ENCODE measurements at regions of chr5 and their contacts with region 1.

Region 1: DNA sequence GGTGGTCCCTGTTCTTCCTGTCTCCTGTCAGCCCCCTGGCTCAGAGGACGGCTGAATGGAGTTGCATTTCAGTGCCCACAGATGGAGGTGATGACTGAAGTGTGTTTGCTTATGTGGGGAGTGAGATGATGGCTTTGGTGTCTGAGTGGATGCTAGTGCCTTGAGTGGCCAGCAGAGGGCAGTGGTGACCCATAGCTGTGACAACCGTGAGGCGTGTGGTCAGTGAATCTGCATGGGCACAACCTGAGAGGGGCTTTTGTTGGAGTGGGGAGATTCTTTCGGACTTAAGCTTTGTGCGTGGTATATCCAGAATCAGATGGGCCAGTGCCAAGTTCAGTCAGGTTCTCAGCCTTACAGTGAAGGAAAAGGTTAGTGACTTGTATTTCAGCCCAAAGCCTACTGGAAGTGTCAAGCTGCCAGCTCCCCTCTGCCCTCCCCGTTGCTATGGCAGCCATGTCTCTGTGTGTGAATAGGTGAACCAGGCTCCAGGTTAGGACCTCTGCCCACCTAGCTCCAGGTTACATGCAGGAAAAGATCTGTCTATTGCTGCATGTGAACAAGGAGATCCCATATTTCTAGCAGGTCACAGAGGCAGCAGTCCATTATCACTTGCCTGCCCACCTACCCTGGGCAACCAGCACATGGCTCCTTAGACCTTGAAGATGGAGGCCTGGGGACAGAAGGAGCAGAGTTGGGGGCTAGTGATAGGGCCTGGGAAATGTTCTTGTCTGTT is 14.7 kb upstream of the CXXC5 start:
- DNase-seq: peak; percentile 72 to 82 (median 79)
- H3K4me3 ChIP-seq: no peak overlapping the region
- H3K27ac ChIP-seq: no peak overlapping the region
- H3K4me1 ChIP-seq: peaks cover 9 to 49% (median 37%) of the 10 kb centered on the region in 4 experiments
- H3K27me3 ChIP-seq: no peaks in the 10 kb centered on the region

Region 2: GRCh38 chr5:139611703-139612584 is 21.5 kb before region 1 on chr5:
- CTCF ChIA-PET with region 1: interaction called, 15 read pairs
- POLR2A ChIA-PET with region 1: no interaction called
- DNase-seq: peak in 1 of 3 donors; percentile 12
- H3K4me3 ChIP-seq: no peak overlapping the region
- H3K27ac ChIP-seq: no peak overlapping the region
- H3K4me1 ChIP-seq: no peaks in the 10 kb centered on the region
- H3K27me3 ChIP-seq: no peaks in the 10 kb centered on the region

Region 3: DNA sequence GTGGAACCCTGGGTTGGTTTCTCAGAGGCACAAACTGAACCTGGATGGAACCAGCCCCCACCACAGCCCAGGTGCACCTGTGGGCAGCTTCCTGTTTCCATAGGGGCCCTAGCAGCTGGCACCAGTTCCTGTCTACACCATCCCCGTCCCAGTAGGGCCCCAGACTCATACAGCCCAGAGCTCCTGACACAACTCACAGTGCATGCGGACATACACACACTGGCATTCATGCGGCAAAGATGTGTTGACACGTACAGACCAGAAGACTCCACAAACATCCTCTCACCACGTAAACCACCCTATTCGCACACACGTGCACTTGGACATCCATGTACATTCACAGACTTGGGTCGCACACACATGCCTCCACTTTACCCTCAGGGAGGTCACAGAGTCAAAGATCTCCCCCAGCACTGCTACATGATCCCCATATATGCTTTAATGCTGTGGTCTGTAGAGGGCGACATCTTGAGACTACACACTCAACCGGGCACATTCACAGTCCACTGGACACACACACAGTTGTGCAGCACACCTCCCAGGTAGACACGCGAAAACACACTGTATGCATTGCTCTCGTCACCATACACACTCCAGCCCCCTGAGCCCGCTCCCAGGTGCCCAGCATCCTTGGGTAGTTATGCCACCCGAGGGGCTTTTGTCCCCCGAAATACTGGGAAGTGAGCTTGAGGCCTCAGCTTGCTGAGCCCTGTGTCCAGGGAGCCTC is 37.1 kb after region 1 on chr5:
- CTCF ChIA-PET with region 1: interaction called, 232 read pairs
- POLR2A ChIA-PET with region 1: interaction called, 26 read pairs
- DNase-seq: peak; percentile 78 to 98 (median 97)
- H3K4me3 ChIP-seq: peak overlapping the region in 6 of 7 experiments; percentile 20 to 78 (median 54)
- H3K27ac ChIP-seq: peak overlapping the region; percentile 48 to 86
- H3K4me1 ChIP-seq: peaks cover 21 to 96% (median 96%) of the 10 kb centered on the region in 4 experiments
- H3K27me3 ChIP-seq: no peaks in the 10 kb centered on the region

Region 4: GRCh38 chr5:139696894-139697658 is 63.6 kb after region 1 on chr5:
- CTCF ChIA-PET with region 1: interaction called, 211 read pairs
- POLR2A ChIA-PET with region 1: no interaction called
- DNase-seq: peak; percentile 50 to 85 (median 78)
- H3K4me3 ChIP-seq: peak overlapping the region; percentile 29 to 72 (median 59)
- H3K27ac ChIP-seq: peak overlapping the region; percentile 54 to 80
- H3K4me1 ChIP-seq: peaks cover 0 to 89% (median 55%) of the 10 kb centered on the region in 4 experiments
- H3K27me3 ChIP-seq: no peaks in the 10 kb centered on the region

Region 5: DNA sequence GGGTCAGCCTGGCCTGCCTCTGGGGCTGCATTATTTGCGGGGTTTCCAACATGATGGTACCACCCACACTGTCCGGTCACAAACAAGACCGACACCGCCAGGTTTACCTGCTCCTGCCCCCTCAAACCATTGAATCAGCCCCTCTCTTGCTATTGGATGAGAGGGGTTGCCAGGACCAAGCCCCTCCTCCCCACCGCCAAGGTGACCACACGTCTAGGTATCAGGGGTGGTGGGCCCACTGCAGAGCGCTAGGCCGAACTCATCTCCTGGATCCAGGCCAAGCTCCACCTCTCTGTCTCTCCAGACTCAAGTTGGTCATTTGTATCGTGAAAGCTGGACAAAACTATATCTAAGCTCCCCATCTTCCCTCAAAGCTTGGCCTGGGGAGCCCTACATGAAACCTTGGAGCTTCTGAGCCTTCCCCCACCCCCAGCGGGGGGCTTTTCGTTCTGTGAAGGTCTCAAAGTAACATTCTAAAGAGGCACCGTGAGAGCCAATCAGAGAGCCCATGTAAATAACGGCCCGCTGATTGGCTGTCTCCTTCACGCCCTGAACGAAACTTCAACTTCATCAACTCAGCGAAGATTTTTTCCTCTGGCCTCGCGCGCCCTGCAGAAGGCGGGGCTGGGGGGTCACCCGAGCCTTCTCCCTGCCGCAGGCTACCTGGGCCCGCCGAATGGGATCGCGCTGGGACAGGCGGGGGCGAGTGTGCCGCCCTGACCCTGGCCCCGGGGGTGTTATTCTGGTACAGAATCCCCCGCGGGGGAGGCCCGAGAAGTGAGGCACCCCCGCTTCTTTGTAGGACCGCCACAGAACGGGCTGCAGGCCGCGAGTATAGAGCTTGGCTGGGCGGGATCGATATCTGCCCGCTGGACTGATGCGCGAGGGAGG is 112.6 kb after region 1 on chr5:
- CTCF ChIA-PET with region 1: interaction called, 12 read pairs
- POLR2A ChIA-PET with region 1: interaction called, 3 read pairs
- DNase-seq: peak; percentile 57 to 75 (median 75)
- H3K4me3 ChIP-seq: peak overlapping the region in 3 of 7 experiments; percentile 33 to 68 (median 54)
- H3K27ac ChIP-seq: no peak overlapping the region
- H3K4me1 ChIP-seq: peaks cover 0 to 45% (median 41%) of the 10 kb centered on the region in 4 experiments
- H3K27me3 ChIP-seq: peaks cover 0 to 49% (median 21%) of the 10 kb centered on the region in 5 experiments

Measured in common myeloid progenitor, CD34-positive (primary cell).